ENCODE measurements at regions of chr20 and their contacts with region 1.

Region 1: DNA sequence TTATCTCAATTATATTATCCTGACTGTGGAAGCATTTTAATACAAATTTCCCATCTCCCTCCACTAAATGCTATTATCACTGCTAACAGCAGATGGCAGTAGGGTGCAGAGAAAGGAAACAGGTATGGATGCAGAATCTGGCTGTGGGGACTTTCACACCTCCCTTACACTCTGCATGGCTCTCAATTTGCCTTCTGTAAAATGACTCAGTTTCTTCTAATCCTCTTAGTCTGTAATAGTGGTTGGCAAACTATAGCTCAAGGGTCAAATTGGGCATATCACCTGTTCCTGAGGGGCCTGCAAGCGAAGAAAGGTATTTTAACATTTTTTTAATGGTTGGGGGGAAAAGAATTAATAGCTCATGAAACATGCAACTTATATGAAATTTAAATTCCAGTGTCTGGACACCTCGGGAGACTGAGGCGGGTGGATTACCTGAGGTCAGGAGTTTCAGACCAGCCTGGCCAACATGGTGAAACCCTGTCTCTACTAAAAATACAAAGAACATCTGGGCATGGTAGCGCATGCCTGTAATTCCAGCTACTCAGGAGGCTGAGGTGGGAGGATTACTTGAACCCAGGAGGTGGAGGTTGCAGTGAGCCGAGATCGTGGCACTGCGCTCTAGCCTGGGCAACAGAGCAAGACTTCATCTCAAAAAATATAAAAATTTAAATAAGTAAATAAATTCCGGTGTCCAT is 83.5 kb downstream of the ZMYND8 start:
- H3K4me3 ChIP-seq: no peak overlapping the region
- H3K27ac ChIP-seq: no peak overlapping the region
- H3K4me1 ChIP-seq: peaks cover 3% of the 10 kb centered on the region
- CTCF ChIP-seq: peak; percentile 58

Region 2: GRCh38 chr20:47258745-47259695 is 14.0 kb before region 1 on chr20:
- CTCF ChIA-PET with region 1: interaction called, 17 read pairs
- POLR2A ChIA-PET with region 1: no interaction called
- H3K4me3 ChIP-seq: no peak overlapping the region
- H3K27ac ChIP-seq: no peak overlapping the region
- H3K4me1 ChIP-seq: no peaks in the 10 kb centered on the region
- CTCF ChIP-seq: no peak

Region 3: GRCh38 chr20:47343007-47343472 is 70.0 kb after region 1 on chr20:
- CTCF ChIA-PET with region 1: interaction called, 11 read pairs
- POLR2A ChIA-PET with region 1: no interaction called
- H3K4me3 ChIP-seq: no peak overlapping the region
- H3K27ac ChIP-seq: no peak overlapping the region
- H3K4me1 ChIP-seq: peaks cover 12% of the 10 kb centered on the region
- CTCF ChIP-seq: no peak

Region 4: DNA sequence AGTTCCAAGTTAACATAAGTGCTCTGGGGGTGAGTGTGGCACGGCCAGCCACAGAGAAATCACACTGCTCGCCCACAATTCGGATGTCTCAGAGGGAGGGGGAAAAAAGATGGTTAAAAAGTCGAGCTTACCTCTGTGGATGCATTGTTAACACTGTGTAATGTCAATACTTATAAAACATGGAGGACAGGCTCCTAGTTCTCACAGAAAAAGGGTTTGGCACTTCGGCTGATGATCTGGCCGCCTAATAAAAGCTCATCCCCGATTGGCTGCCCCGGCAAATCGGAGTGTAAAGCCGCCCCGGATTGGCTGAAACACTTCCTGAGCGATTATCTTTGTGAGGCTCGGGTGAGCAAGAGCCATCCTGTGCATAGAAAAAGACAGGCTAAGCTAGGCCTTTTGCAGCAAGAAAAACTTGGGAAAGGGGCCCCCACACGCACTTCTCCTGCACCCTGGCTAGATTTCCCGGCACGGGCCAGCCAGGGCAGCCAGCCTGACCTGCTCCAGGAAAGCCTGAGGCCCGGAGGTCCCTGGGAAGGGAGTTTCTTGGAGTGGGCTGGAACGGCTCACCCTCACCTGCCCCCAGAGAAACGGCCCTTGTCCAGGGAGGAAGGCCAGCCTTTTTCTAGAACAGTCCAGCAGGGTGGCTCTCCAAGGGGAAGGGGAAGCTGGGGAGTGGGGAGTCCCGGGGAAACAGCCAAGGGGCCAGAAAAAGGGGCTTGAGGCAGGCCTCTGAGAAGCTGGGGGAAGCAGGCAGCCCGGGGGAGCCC is 83.7 kb after region 1 on chr20 and contains the start of gene ZMYND8:
- CTCF ChIA-PET with region 1: interaction called, 26 read pairs
- POLR2A ChIA-PET with region 1: interaction called, 5 read pairs
- H3K4me3 ChIP-seq: peak within 1 kb of the TSS; percentile 30
- H3K27ac ChIP-seq: peak within 1 kb of the TSS; percentile 97
- H3K4me1 ChIP-seq: peaks cover 49% of the 10 kb centered on the region
- CTCF ChIP-seq: no peak

Region 5: GRCh38 chr20:47620808-47621805 is 348.1 kb after region 1 on chr20:
- CTCF ChIA-PET with region 1: interaction called, 38 read pairs
- POLR2A ChIA-PET with region 1: no interaction called
- H3K4me3 ChIP-seq: no peak overlapping the region
- H3K27ac ChIP-seq: no peak overlapping the region
- H3K4me1 ChIP-seq: no peaks in the 10 kb centered on the region
- CTCF ChIP-seq: peak; percentile 59

Measured in HEK293 (cell line).